ENCODE measurements at regions of chr17 and their contacts with region 1.

Region 1: DNA sequence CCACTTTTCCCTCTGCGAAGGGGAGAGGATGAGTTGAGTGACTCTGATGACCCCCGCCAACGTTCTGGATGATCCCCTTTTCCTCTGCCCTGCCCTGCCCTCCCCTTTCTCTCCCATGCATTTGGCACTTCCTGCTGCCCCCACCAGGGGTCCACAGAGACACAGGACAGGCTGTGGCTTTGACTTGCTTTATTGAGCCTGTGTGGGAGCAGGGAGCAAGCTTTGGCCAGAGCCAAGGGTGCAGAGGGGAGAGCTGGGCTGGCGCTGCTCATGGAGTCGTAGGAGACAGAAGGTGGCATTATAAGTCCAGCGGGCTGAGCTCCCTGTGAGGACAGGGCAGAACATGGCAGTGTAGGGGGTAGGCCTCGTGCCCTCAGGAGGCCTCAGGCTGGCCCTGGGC is 1.6 kb downstream of the PPY start:
- DNase-seq: peak; percentile 73
- H3K4me3 Mint-ChIP-seq: no peak overlapping the region
- H3K27ac Mint-ChIP-seq: no peak overlapping the region
- H3K4me1 Mint-ChIP-seq: peaks cover 11% of the 10 kb centered on the region
- H3K27me3 Mint-ChIP-seq: peaks cover 81% of the 10 kb centered on the region
- CTCF ChIP-seq: peak; percentile 89

Region 2: DNA sequence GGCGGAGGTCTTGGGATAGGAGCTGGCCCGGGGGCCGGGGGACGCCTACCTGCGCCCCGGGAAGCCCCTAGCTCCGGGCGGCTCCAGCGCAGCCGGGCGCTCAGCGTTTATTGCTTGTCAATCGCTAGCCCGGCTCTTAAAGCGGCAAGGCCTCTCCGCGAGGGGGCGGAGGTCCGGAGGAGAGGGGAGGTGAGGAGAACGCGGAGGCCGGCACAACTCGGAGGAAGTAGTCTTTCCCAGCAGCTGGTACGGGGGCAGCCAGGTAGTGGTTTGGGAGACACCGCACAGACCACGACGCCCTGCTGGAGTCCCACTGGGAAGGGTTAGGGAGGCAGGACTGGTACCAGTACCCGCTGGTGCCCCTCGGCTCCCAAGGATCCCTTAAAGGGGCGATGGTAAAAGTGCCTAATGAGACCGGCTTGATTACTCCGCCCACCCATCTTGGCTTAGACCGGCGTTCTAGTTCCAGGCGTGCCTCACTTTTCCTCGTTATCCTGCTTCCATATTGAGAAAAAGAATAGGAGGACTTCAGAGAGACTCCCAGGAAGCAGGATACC is 33.1 kb before region 1 on chr17 and contains the start of gene MPP2:
- CTCF ChIA-PET with region 1: interaction called, 24 read pairs
- intact Hi-C with region 1: no loop called
- DNase-seq: peak; percentile 57
- H3K4me3 Mint-ChIP-seq: peak within 1 kb of the TSS; percentile 50
- H3K27ac Mint-ChIP-seq: no peak within 1 kb of the TSS
- H3K4me1 Mint-ChIP-seq: peaks cover 14% of the 10 kb centered on the region
- H3K27me3 Mint-ChIP-seq: peaks cover 73% of the 10 kb centered on the region
- CTCF ChIP-seq: peak; percentile 34
- total RNA-seq, gene MPP2: 5.5 and 6.7 TPM in 2 replicates

Region 3: GRCh38 chr17:43952717-43953666 is 12.4 kb after region 1 on chr17:
- CTCF ChIA-PET with region 1: interaction called, 13 read pairs
- intact Hi-C with region 1: no loop called
- DNase-seq: no peak
- H3K4me3 Mint-ChIP-seq: peak overlapping the region; percentile 33
- H3K27ac Mint-ChIP-seq: no peak overlapping the region
- H3K4me1 Mint-ChIP-seq: peaks cover 9% of the 10 kb centered on the region
- H3K27me3 Mint-ChIP-seq: peaks cover 80% of the 10 kb centered on the region
- CTCF ChIP-seq: no peak

Region 4: GRCh38 chr17:43994272-43995149 is 53.9 kb after region 1 on chr17:
- CTCF ChIA-PET with region 1: interaction called, 12 read pairs
- intact Hi-C with region 1: loop called (anchors 1 kb)
- DNase-seq: peak; percentile 81
- H3K4me3 Mint-ChIP-seq: peak overlapping the region; percentile 24
- H3K27ac Mint-ChIP-seq: no peak overlapping the region
- H3K4me1 Mint-ChIP-seq: no peaks in the 10 kb centered on the region
- H3K27me3 Mint-ChIP-seq: peaks cover 18% of the 10 kb centered on the region
- CTCF ChIP-seq: peak; percentile 98

Region 5: GRCh38 chr17:44006598-44007345 is 66.1 kb after region 1 on chr17:
- CTCF ChIA-PET with region 1: interaction called, 14 read pairs
- intact Hi-C with region 1: no loop called
- DNase-seq: peak; percentile 99
- H3K4me3 Mint-ChIP-seq: peak overlapping the region; percentile 80
- H3K27ac Mint-ChIP-seq: peak overlapping the region; percentile 22
- H3K4me1 Mint-ChIP-seq: peaks cover 22% of the 10 kb centered on the region
- H3K27me3 Mint-ChIP-seq: peaks cover 40% of the 10 kb centered on the region
- CTCF ChIP-seq: peak; percentile 72

Region 6: GRCh38 chr17:44024271-44024663 is 83.6 kb after region 1 on chr17:
- CTCF ChIA-PET with region 1: no interaction called
- intact Hi-C with region 1: no loop called
- DNase-seq: no peak
- H3K4me3 Mint-ChIP-seq: no peak overlapping the region
- H3K27ac Mint-ChIP-seq: no peak overlapping the region
- H3K4me1 Mint-ChIP-seq: no peaks in the 10 kb centered on the region
- H3K27me3 Mint-ChIP-seq: no peaks in the 10 kb centered on the region
- CTCF ChIP-seq: no peak

Region 7: GRCh38 chr17:44043272-44043696 is 102.7 kb after region 1 on chr17:
- CTCF ChIA-PET with region 1: interaction called, 24 read pairs
- intact Hi-C with region 1: loop called (anchors 2 kb)
- DNase-seq: no peak
- H3K4me3 Mint-ChIP-seq: no peak overlapping the region
- H3K27ac Mint-ChIP-seq: no peak overlapping the region
- H3K4me1 Mint-ChIP-seq: peaks cover 11% of the 10 kb centered on the region
- H3K27me3 Mint-ChIP-seq: no peaks in the 10 kb centered on the region
- CTCF ChIP-seq: no peak

Region 8: GRCh38 chr17:44159519-44160210 is 219.0 kb after region 1 on chr17:
- CTCF ChIA-PET with region 1: no interaction called
- intact Hi-C with region 1: no loop called
- DNase-seq: no peak
- H3K4me3 Mint-ChIP-seq: no peak overlapping the region
- H3K27ac Mint-ChIP-seq: no peak overlapping the region
- H3K4me1 Mint-ChIP-seq: no peaks in the 10 kb centered on the region
- H3K27me3 Mint-ChIP-seq: no peaks in the 10 kb centered on the region
- CTCF ChIP-seq: no peak

Region 9: GRCh38 chr17:44170499-44171201 is 230.0 kb after region 1 on chr17 and contains the start of gene ASB16:
- CTCF ChIA-PET with region 1: interaction called, 23 read pairs
- intact Hi-C with region 1: no loop called
- DNase-seq: no peak
- H3K4me3 Mint-ChIP-seq: no peak within 1 kb of the TSS
- H3K27ac Mint-ChIP-seq: no peak within 1 kb of the TSS
- H3K4me1 Mint-ChIP-seq: peaks cover 12% of the 10 kb centered on the region
- H3K27me3 Mint-ChIP-seq: no peaks in the 10 kb centered on the region
- CTCF ChIP-seq: no peak
- total RNA-seq, gene ASB16: 0.19 TPM in 1 of 2 replicates, not detected in the other

Region 10: DNA sequence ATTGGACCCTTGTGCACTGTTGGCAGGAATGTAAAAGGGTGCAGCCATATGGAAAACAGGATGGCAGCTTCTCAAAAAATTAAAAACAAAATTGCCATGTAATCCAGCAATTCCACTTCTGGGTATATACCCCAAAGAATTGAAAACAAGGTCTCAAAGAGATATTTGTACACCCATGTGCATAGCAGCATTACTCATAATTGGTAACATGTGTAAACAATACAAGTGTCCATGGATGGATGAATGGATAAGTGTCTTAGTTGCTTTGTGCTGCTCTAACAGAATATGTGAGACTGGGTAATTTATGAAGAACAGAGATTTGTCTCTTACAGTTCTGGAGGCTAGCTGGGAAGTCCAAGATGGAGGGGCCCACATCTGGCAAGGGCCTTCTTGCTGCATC is 364.0 kb after region 1 on chr17:
- CTCF ChIA-PET with region 1: no interaction called
- intact Hi-C with region 1: no loop called
- DNase-seq: no peak
- H3K4me3 Mint-ChIP-seq: no peak overlapping the region
- H3K27ac Mint-ChIP-seq: no peak overlapping the region
- H3K4me1 Mint-ChIP-seq: peaks cover 5% of the 10 kb centered on the region
- H3K27me3 Mint-ChIP-seq: peaks cover 81% of the 10 kb centered on the region
- CTCF ChIP-seq: no peak

Measured in Calu3 (cell line).